Heart right ventricle (tissue), 16 donors: ENCODE measurements at regions of chr2 and their contacts with region 1.

Region 1: DNA sequence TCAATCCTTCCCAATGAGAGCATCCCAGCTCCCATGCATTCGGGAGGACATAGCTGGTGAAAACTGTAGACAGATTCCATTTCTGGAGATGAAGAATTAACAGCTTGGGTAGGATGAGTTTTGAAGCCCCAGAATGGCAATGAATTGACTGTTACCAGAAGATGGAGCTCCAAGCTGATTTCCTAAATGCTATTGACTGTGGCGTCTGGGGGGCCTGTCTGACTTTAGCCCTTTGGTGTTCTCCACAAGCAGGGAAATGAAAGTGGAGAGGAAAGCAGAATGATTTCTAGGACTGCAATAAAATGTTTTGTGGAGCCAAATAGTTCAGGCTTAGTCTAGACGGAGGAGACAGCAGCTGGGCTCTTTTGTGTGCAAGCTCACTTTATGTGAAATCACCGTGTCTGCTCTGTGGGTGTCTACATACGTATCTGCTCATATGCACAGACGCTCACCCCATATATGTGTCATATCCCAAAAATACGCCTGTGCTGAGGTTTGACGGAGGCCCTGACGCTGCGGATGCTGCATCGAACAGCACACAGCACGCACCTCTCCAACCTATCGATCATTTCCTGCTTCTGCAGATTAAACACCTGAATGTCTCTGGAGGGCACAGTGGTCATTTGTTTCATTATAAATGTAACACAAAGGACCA is 166.4 kb upstream of the PXDN start:
- DNase-seq: no peak
- ATAC-seq: peak in 5 of 8 donors; percentile 44 to 56 (median 49)
- H3K4me3 ChIP-seq: no peak overlapping the region
- H3K27ac ChIP-seq: no peak overlapping the region
- H3K4me1 ChIP-seq: peaks cover 0 to 6% (median 0%) of the 10 kb centered on the region in 9 donors
- H3K27me3 ChIP-seq: peaks cover 0 to 14% (median 0%) of the 10 kb centered on the region in 7 donors
- CTCF ChIP-seq: peak; percentile 9 to 69 (median 46)

Region 2: GRCh38 chr2:2112416-2113105 is 201.8 kb after region 1 on chr2:
- intact Hi-C with region 1: loop called in 1 of 10 experiments (anchors 10 kb)
- DNase-seq: no peak
- ATAC-seq: no peak
- H3K4me3 ChIP-seq: no peak overlapping the region
- H3K27ac ChIP-seq: no peak overlapping the region
- H3K4me1 ChIP-seq: peaks cover 0 to 20% (median 9%) of the 10 kb centered on the region in 9 donors
- H3K27me3 ChIP-seq: peaks cover 0 to 30% (median 0%) of the 10 kb centered on the region in 7 donors
- CTCF ChIP-seq: no peak

Region 3: DNA sequence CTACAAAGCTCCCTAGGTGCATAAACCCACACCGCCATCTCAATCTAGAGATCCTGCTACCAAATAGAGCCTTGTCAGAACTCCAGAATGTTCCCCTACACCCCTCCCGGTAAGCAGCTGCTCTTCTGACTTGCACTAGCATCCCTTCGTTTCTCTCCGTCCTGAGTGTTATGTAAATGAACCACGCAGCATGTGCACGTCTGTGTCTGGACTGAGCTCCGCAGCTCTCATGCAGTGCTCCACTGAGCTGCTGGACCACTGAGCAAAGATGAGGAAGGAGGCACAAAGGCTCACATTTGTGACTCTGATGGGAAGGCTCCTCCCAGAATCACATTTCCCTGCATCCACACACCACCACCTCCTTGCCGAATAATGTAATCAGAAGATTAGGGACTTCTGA is 216.7 kb after region 1 on chr2:
- intact Hi-C with region 1: loop called in 4 of 10 experiments (anchors 10 kb)
- DNase-seq: no peak
- ATAC-seq: no peak
- H3K4me3 ChIP-seq: no peak overlapping the region
- H3K27ac ChIP-seq: no peak overlapping the region
- H3K4me1 ChIP-seq: no peaks in the 10 kb centered on the region
- H3K27me3 ChIP-seq: peaks cover 0 to 29% (median 6%) of the 10 kb centered on the region in 7 donors
- CTCF ChIP-seq: no peak

Region 4: GRCh38 chr2:2291500-2292260 is 381.0 kb after region 1 on chr2:
- intact Hi-C with region 1: loop called in 7 of 10 experiments (anchors 2 to 10 kb)
- DNase-seq: peak in 1 of 2 donors; percentile 43
- ATAC-seq: peak; percentile 46 to 91 (median 84)
- H3K4me3 ChIP-seq: no peak overlapping the region
- H3K27ac ChIP-seq: no peak overlapping the region
- H3K4me1 ChIP-seq: peaks cover 0 to 3% (median 0%) of the 10 kb centered on the region in 9 donors
- H3K27me3 ChIP-seq: peaks cover 0 to 52% (median 19%) of the 10 kb centered on the region in 7 donors
- CTCF ChIP-seq: peak; percentile 14 to 72 (median 64)